Activated T-helper 2 cell treated with anti-CD3 and anti-CD28 coated beads, Interferon-gamma antibody, Interleukin-2, Interleukin-4, amounts not matched to agents 10 μg/mL and 5 μg/mL and 100 μg/mL, durations not matched to agents 14 hours and 24 hours and 36 hours (primary cell): ENCODE measurements at regions of chrX and their contacts with region 1.

Region 1: GRCh38 chrX:41275661-41276609 is 58.0 kb upstream of the DDX3X start:
- DNase-seq: peak; percentile 18
- H3K4me3 Mint-ChIP-seq: peak overlapping the region; percentile 78
- H3K27ac Mint-ChIP-seq: peak overlapping the region; percentile 82
- H3K4me1 Mint-ChIP-seq: peaks cover 4% of the 10 kb centered on the region
- H3K27me3 Mint-ChIP-seq: no peaks in the 10 kb centered on the region

Region 2: DNA sequence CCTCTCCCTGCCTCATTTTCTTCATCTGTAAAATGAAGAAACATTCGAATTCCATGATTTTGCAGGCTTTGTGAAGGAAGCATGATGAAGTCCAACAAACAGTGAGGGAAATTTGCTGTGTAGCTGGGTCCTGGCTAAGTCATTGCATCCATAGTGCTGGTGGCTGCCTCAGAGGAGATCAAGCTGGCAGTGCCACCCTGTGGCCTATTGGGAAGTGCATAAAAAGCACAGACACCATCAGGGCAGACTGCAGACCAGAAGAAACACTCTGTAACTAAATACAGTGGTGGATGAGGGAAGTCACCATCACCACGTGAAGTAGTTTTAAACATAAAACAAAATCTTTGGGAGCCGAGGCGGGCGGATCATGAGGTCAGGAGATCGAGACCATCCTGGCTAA is 17.3 kb after region 1 on chrX:
- intact Hi-C with region 1: no loop called
- DNase-seq: no peak
- H3K4me3 Mint-ChIP-seq: no peak overlapping the region
- H3K27ac Mint-ChIP-seq: no peak overlapping the region
- H3K4me1 Mint-ChIP-seq: no peaks in the 10 kb centered on the region
- H3K27me3 Mint-ChIP-seq: no peaks in the 10 kb centered on the region

Region 3: GRCh38 chrX:41350976-41351569 is 75.1 kb after region 1 on chrX:
- intact Hi-C with region 1: loop called (anchors 5 kb)
- DNase-seq: no peak
- H3K4me3 Mint-ChIP-seq: no peak overlapping the region
- H3K27ac Mint-ChIP-seq: peak overlapping the region; percentile 17
- H3K4me1 Mint-ChIP-seq: peaks cover 25% of the 10 kb centered on the region
- H3K27me3 Mint-ChIP-seq: no peaks in the 10 kb centered on the region

Region 4: DNA sequence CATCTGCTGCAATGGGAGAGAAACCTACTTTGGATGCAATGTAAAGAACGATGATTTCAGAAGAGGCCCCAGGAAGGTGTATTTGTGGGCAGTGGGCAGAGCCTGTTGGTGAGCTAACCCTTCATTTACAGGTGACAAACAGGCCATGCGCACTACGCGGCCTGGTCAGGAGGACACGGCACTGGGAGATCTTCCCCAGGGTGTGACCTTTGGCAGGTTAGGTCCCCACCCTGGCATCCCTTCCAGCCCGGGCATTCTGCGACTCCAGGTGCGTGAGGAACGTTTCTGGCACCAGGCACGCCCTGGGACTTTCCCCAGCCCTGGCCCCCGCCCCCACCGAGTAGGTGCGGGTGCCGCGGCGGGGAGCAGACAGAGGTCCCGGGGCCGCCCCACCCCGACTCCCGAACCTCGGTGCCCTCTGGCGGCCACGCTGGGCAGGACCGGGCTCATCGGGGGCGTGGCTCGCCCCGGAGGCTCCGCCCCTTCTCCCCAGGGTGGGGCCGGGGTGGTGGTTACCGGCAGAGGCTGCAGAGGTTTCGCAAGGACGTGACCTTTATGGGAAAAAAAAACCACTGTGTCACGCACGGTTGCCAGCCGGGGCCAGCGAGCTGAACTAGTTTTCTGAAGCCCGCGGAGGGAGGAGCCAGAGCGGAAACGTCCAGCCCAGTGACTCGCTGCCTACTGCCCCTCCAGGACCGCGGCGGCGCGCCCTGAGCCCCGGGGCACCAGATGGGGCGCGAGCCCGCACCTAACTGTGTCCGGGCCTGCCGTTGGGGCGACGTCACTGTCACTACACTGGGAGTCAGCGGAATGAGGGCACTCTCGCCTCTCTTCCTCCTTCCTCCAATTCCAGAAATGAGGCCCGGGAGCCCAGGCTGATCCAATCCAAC is 166.2 kb after region 1 on chrX:
- intact Hi-C with region 1: loop called (anchors 5 kb)
- DNase-seq: peak; percentile 87
- H3K4me3 Mint-ChIP-seq: peak overlapping the region; percentile 62
- H3K27ac Mint-ChIP-seq: peak overlapping the region; percentile 89
- H3K4me1 Mint-ChIP-seq: peaks cover 9% of the 10 kb centered on the region
- H3K27me3 Mint-ChIP-seq: no peaks in the 10 kb centered on the region

Region 5: DNA sequence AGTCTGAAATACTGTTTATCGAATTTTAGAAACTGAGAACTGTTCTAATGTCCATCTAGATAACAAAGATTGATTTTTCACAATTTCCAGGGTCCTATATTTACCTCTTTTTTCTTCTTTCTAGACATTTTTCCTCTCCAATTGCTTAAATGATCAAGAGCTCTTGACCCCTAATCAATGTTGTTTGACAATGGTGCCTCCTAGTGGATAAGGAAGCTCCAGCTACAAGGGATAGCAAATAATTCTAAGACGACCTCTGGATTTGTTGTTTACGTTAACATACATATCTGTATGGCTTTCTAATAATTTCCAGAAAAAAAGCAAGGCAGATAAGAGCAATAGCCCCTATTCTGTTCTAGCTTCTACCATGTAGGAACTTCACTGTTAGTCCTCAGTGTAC is 483.9 kb after region 1 on chrX:
- intact Hi-C with region 1: loop called (anchors 10 kb)
- DNase-seq: no peak
- H3K4me3 Mint-ChIP-seq: no peak overlapping the region
- H3K27ac Mint-ChIP-seq: no peak overlapping the region
- H3K4me1 Mint-ChIP-seq: no peaks in the 10 kb centered on the region
- H3K27me3 Mint-ChIP-seq: no peaks in the 10 kb centered on the region